A673 (cell line): ENCODE measurements at regions of chrX and their contacts with region 1.

Region 1: GRCh38 chrX:132488819-132489577 is at the start of gene MBNL3:
- DNase-seq: peak; percentile 76
- H3K4me3 ChIP-seq: peak within 1 kb of the TSS; percentile 57
- H3K27ac ChIP-seq: peak within 1 kb of the TSS; percentile 90
- H3K4me1 ChIP-seq: no peaks in the 10 kb centered on the region
- H3K27me3 ChIP-seq: no peaks in the 10 kb centered on the region
- CTCF ChIP-seq: no peak
- total RNA-seq, gene MBNL3: 38.0 and 42.2 TPM in 2 replicates

Region 2: GRCh38 chrX:132226169-132226568 is 262.8 kb before region 1 on chrX:
- CTCF ChIA-PET with region 1: no interaction called
- POLR2A ChIA-PET with region 1: no interaction called
- intact Hi-C with region 1: loop called (anchors 10 kb)
- DNase-seq: peak; percentile 23
- H3K4me3 ChIP-seq: no peak overlapping the region
- H3K27ac ChIP-seq: no peak overlapping the region
- H3K4me1 ChIP-seq: no peaks in the 10 kb centered on the region
- H3K27me3 ChIP-seq: peaks cover 5% of the 10 kb centered on the region
- CTCF ChIP-seq: peak; percentile 59

Region 3: DNA sequence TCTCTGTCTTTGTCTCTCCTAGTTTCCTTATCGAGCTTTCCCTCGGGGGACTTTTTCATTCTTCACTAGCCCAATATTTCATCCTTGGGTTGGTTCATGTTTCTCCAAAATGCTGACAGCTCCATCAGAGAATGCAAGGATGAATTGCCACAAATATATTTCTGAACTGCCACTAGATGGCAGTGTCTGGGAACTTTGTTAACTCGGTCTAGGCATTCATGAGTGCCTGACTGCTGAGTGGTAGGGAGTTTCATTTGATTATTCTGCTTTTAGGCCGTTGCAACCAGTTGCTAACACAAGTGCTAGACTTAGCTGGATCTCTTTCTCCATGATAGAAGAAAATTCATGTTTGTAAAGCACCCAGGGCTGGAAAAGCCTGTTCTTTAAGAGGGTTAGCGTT is 196.2 kb before region 1 on chrX:
- CTCF ChIA-PET with region 1: no interaction called
- POLR2A ChIA-PET with region 1: no interaction called
- intact Hi-C with region 1: loop called (anchors 10 kb)
- DNase-seq: peak; percentile 63
- H3K4me3 ChIP-seq: no peak overlapping the region
- H3K27ac ChIP-seq: no peak overlapping the region
- H3K4me1 ChIP-seq: no peaks in the 10 kb centered on the region
- H3K27me3 ChIP-seq: no peaks in the 10 kb centered on the region
- CTCF ChIP-seq: peak; percentile 73